MCF 10A (cell line): ENCODE measurements at regions of chr1 and their contacts with region 1.

Region 1: DNA sequence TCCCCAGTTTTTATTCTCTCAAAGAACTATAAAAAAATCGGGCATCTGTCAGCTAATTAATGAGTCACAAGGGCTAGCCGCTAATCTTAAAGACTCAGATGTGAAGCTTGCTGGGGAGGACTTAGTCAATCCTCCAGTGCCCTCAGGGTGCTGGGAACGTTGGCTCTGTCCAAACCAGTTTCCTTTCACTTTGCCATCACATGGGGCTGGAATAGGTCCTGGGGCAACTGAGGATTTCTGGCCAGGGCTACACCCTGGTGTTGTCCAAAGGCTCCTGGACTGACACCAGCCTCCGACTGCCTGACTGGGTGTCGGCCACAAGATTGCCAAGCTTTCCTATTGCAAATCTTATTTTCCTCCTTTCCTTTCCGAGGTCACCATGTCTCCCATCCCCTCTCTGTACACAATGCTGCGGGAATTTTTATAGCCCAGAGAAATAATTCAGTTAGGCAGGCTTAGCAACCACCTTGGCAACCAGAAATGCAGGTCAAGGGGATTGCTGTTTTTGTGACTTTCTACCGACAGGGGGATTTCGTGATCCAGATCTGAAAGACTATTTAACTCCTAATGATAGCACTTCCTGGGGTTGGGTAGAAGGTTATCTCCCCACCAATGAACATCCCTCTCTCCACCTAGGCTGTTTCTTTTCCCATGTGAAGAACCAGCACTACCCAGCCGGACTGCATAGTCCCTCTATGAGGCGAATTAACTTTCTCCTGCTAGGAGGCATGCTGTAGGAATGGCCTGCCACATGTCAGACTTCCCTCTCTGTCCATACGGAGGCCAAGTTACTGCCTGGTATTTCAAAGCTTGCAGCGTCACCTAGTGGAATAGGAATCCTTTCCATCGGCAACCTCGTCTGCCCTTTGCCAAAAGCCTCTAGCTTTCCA is 29.9 kb upstream of the CTBS start:
- DNase-seq: peak; percentile 96
- H3K4me3 Mint-ChIP-seq: peak overlapping the region; percentile 73
- H3K27ac Mint-ChIP-seq: peak overlapping the region; percentile 76
- H3K4me1 Mint-ChIP-seq: peaks cover 26% of the 10 kb centered on the region
- H3K27me3 Mint-ChIP-seq: no peaks in the 10 kb centered on the region
- CTCF ChIP-seq: peak; percentile 11

Region 2: DNA sequence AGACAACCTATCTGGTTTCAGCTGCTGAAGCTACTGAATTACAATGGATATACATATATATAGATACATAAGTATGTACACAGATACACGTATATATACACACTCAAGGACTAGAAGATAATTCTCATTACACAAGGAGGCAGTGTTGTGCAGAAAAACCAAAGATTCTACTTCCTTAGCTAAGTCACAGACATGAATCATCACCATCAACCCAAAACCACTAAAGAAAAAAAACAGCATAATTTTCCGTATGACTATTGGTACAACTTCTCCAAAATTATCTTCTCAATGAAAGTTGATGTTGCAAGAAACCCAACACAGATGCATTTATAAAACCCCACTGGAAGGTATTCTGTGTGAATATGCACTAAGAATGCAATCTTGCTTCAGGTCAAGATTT is 161.9 kb before region 1 on chr1:
- CTCF ChIA-PET with region 1: interaction called, 12 read pairs
- POLR2A ChIA-PET with region 1: interaction called, 6 read pairs
- intact Hi-C with region 1: no loop called
- DNase-seq: peak; percentile 87
- H3K4me3 Mint-ChIP-seq: no peak overlapping the region
- H3K27ac Mint-ChIP-seq: no peak overlapping the region
- H3K4me1 Mint-ChIP-seq: no peaks in the 10 kb centered on the region
- H3K27me3 Mint-ChIP-seq: no peaks in the 10 kb centered on the region
- CTCF ChIP-seq: peak; percentile 39

Region 3: GRCh38 chr1:84644472-84644871 is 40.3 kb after region 1 on chr1:
- CTCF ChIA-PET with region 1: no interaction called
- POLR2A ChIA-PET with region 1: no interaction called
- intact Hi-C with region 1: no loop called
- DNase-seq: no peak
- H3K4me3 Mint-ChIP-seq: no peak overlapping the region
- H3K27ac Mint-ChIP-seq: no peak overlapping the region
- H3K4me1 Mint-ChIP-seq: no peaks in the 10 kb centered on the region
- H3K27me3 Mint-ChIP-seq: no peaks in the 10 kb centered on the region
- CTCF ChIP-seq: no peak

Region 4: GRCh38 chr1:84847253-84848250 is 243.4 kb after region 1 on chr1:
- CTCF ChIA-PET with region 1: no interaction called
- POLR2A ChIA-PET with region 1: no interaction called
- intact Hi-C with region 1: no loop called
- DNase-seq: peak; percentile 99
- H3K4me3 Mint-ChIP-seq: peak overlapping the region; percentile 29
- H3K27ac Mint-ChIP-seq: peak overlapping the region; percentile 84
- H3K4me1 Mint-ChIP-seq: peaks cover 44% of the 10 kb centered on the region
- H3K27me3 Mint-ChIP-seq: no peaks in the 10 kb centered on the region
- CTCF ChIP-seq: no peak